A549 (cell line): ENCODE measurements at regions of chr1 and their contacts with region 1.

Region 1: DNA sequence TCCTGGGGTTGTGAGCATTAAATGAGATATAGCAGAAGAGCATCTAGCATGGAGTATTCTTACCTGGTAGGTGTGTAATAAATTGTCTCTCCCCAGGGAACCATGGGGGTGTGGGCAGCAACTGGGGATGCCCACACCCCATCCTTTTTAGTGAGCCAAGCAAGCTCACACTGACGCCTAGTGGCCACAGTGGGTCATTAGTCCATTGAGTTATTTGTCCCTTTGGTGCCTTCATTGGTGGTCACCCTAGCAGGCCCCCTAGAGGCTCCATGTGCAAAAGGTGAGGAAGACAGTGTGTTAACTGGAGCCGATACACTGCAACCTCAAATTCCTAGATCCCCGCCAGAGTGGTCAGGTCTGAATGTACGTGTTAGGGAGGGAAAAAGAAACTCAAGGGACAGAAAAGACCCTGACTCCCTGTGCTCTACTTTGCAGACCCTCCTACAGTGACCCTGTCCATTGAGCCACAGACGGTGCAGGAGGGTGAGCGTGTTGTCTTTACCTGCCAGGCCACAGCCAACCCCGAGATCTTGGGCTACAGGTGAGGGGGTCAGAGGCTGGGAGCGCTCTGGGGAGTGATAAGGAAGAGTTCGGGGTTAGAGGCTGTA is 93.3 kb upstream of the CD1D start:
- DNase-seq: peak; percentile 84 to 86
- ATAC-seq: peak; percentile 89 to 95
- H3K4me3 ChIP-seq: no peak overlapping the region
- H3K27ac ChIP-seq: 0 out of 6 replicates have a peak overlapping the region, but pooled peaks of 1 of the 2 experiments have one; percentile 22
- H3K4me1 ChIP-seq: no peaks in the 10 kb centered on the region
- CTCF ChIP-seq: peak; percentile 99
- EP300 ChIP-seq: no peak
- POLR2A ChIP-seq: no peak
- RAD21 ChIP-seq: peak; percentile 93 to 95

Region 2: DNA sequence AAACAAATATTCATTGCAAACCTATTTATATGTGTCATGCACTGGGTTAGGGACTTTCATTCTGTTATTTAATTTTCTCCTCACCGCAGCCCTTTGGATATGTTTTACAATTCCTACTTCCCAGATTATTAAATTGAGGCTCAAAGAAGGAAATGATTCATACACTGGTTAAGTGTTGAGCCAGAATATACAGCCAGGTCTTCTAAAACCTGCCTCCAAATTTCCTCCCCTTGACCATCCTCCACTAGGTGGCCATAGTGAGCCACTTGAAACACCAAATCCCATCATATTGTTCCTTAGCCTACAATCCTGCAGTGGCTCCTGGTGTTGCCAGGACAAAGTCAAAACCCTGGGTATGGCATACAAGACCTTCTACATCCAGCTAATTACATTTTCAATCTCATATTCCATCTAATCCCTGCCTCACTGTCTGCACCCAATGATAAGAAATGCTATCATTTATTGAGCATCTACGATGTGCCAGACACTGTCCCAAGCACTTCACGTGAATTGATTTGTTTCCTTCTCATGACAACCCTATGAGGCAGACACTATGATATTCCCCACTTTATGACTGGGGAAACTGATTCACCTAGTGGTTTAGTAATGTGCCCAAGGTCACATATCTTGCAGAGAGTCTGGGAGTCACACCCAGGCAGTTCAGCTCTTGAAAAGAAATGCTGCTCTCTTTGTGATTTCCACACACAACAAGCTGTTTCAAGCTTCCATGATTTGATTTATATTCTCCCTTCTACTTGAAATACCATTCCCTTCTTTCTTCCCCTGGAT is 117.5 kb before region 1 on chr1:
- CTCF ChIA-PET with region 1: interaction called, 2,212 read pairs
- POLR2A ChIA-PET with region 1: no interaction called
- DNase-seq: peak; percentile 60 to 72
- ATAC-seq: peak; percentile 70 to 84
- H3K4me3 ChIP-seq: no peak overlapping the region
- H3K27ac ChIP-seq: peak overlapping the region; percentile 75 to 87
- H3K4me1 ChIP-seq: peaks cover 44% of the 10 kb centered on the region
- CTCF ChIP-seq: peak; percentile 85
- EP300 ChIP-seq: no peak
- POLR2A ChIP-seq: no peak
- RAD21 ChIP-seq: peak; percentile 77 to 85

Region 3: DNA sequence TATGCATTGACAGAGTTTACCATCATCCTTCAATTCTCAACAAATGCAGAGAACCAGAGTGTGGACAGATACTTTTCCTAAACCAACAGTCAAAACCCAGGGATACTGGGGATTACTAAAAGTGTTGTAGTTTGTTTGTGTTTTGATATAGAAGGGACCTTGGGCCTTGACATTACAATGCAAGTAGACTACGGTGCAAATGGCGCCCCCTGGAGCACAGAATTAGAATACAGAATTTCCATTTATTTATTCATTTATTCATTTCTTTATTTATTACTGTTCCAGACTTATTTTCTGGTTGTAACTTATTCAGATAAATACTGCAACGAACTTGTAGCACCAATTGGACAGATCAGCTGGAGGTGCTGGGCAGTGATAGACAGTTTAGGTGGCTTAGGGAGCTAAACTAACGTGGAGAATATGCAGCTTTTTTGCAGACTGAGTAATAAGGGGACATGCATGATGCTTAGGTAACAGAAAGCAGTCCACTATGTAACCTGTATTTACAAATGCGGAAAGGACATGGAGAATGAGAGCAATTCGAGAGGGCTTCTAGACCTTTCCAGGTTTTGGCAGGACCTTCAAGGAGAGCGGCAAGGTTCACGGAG is 51.3 kb before region 1 on chr1:
- CTCF ChIA-PET with region 1: interaction called, 26 read pairs
- POLR2A ChIA-PET with region 1: no interaction called
- DNase-seq: peak in 1 of 2 experiments; percentile 72
- ATAC-seq: peak; percentile 23 to 57; a peak in 3 of 6 replicates
- H3K4me3 ChIP-seq: no peak overlapping the region
- H3K27ac ChIP-seq: peak overlapping the region; percentile 66 to 84; a peak in 5 of 6 replicates
- H3K4me1 ChIP-seq: peaks cover 36% of the 10 kb centered on the region
- CTCF ChIP-seq: peak; percentile 88
- EP300 ChIP-seq: no peak
- POLR2A ChIP-seq: no peak
- RAD21 ChIP-seq: peak; percentile 81 to 84

Region 4: DNA sequence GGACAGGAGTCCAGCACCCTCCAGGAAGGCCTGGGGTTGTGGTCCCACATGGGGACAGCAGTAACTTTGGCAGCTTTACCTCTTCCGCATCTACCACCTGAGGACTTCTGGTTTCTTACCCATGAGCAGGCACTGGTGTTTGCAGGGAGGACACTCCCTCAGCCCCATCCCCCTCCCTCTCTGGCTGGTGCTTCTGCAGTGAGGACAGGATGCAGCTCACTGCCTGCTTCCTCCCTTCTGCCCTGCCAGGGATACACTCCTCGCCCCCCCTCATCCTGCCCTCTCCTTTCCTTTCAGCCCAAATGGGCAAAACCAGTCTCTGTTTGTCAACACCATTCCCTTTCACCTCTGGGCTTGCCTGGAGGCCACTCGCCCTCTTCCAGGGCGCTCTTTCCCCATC is 31.6 kb before region 1 on chr1:
- CTCF ChIA-PET with region 1: interaction called, 22 read pairs
- POLR2A ChIA-PET with region 1: no interaction called
- DNase-seq: no peak
- ATAC-seq: peak in 1 of 2 experiments; percentile 22; a peak in 1 of 6 replicates
- H3K4me3 ChIP-seq: no peak overlapping the region
- H3K27ac ChIP-seq: no peak overlapping the region
- H3K4me1 ChIP-seq: peaks cover 19% of the 10 kb centered on the region
- CTCF ChIP-seq: no peak
- EP300 ChIP-seq: no peak
- POLR2A ChIP-seq: no peak
- RAD21 ChIP-seq: no peak

Region 5: GRCh38 chr1:158075078-158075477 is 12.3 kb before region 1 on chr1:
- CTCF ChIA-PET with region 1: interaction called, 13 read pairs
- POLR2A ChIA-PET with region 1: no interaction called
- DNase-seq: no peak
- ATAC-seq: no peak
- H3K4me3 ChIP-seq: no peak overlapping the region
- H3K27ac ChIP-seq: no peak overlapping the region
- H3K4me1 ChIP-seq: no peaks in the 10 kb centered on the region
- CTCF ChIP-seq: no peak
- EP300 ChIP-seq: no peak
- POLR2A ChIP-seq: no peak
- RAD21 ChIP-seq: no peak

Region 6: DNA sequence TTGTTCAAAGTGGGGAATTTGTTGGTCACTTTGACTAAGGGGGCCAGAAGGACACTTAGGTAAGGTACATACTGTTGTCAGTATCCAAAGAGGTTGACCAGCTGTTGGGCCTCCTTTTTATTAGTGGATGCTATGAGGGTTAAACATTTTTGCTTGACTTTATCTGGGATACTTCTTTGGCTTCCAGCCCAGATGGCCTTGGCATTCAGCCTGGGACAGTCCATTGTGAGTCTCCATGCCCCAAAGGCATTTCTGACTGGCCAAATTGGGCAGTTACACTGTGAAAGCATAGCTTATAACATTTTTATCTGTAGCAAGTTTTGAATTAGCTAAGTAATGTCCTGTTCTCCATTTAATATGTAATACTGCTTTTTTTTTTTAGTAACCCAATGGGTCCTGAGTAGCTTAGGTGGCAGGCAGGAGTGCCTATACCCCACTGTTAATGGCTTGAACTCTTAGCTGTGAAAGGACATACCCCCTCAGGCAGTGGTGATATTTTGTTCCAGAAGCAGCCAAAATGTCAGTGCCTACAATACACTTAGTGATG is 57.8 kb after region 1 on chr1:
- CTCF ChIA-PET with region 1: no interaction called
- POLR2A ChIA-PET with region 1: no interaction called
- DNase-seq: peak in 1 of 2 experiments; percentile 22
- ATAC-seq: no peak
- H3K4me3 ChIP-seq: no peak overlapping the region
- H3K27ac ChIP-seq: peak overlapping the region; percentile 1 to 54; a peak in 3 of 6 replicates
- H3K4me1 ChIP-seq: peaks cover 17% of the 10 kb centered on the region; the same call in 1 of the 3 replicates
- CTCF ChIP-seq: no peak
- EP300 ChIP-seq: no peak
- POLR2A ChIP-seq: no peak
- RAD21 ChIP-seq: no peak